ENCODE measurements at regions of chr4 and their contacts with region 1.

Region 1: DNA sequence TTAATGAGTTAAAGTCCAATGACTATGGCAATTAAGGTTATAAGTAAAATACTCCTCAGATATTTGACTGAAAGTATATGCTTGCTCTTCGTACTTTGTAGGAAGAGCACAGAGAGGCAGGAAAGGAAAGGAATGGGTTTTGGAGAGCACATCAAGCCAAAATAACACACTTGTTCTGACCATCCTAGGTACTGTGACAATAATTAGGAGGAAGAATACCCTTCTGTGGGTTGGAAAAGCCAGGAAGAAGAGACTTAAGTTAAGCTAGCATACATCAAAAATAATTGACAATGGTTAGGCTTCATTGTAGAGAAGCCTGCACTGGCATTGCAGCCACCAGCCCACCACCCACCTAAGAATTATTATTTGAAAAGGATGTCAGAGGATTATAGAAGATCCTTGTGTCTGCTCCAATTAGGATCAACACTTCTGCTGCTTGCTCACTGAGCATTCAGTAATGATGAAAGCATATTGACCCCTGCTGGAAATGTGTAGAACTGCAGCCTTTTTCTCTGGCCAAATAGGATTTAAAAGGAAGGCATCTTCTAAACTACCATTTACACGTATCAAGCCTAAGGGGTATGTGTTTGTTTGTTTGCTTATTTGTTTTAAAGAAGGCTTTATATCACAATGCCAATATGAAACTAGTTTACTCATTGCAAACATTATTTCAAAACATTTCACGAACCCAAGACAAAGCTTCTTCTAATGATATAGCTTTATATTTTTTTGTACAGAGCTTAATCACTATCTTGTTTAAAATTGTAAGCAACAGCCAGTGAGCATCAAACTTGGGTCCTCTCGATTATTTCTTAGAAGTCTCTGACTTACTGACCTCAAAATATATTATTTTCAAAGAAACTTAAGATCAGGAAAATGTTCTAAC is 286.2 kb upstream of the TET2 start:
- DNase-seq: no peak
- ATAC-seq: peak; percentile 88
- H3K4me3 ChIP-seq: no peak overlapping the region
- H3K27ac ChIP-seq: no peak overlapping the region
- H3K4me1 ChIP-seq: no peaks in the 10 kb centered on the region
- H3K27me3 ChIP-seq: no peaks in the 10 kb centered on the region

Region 2: DNA sequence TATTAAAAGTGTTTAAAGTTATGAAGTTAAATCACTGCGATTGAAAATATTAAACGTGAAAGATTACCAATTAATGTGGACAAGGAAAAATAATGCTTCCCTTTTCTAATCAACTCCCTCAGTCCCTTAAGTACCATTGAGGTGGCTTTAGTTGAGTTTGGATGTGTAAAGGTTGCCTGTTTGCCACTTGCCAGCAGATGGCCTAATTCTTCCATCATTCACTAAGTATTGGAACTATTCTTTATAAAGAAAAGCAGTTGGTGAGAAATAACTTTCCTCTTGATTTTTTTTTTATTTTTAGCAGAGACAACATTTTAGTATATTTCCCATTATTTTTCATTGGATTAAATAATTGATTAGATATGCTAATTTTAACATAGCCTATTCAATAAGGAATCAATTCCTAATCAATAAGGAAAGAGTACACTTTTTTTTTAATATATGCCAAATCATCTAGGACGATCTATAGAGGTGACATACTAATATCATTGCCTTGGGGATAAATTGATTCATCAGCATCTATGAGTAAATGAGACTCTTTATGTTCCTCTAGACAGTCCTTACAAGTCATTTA is 844.7 kb before region 1 on chr4:
- intact Hi-C with region 1: loop called in 1 of 2 experiments (anchors 10 kb)
- DNase-seq: no peak
- ATAC-seq: no peak
- H3K4me3 ChIP-seq: no peak overlapping the region
- H3K27ac ChIP-seq: no peak overlapping the region
- H3K4me1 ChIP-seq: no peaks in the 10 kb centered on the region
- H3K27me3 ChIP-seq: no peaks in the 10 kb centered on the region

Region 3: DNA sequence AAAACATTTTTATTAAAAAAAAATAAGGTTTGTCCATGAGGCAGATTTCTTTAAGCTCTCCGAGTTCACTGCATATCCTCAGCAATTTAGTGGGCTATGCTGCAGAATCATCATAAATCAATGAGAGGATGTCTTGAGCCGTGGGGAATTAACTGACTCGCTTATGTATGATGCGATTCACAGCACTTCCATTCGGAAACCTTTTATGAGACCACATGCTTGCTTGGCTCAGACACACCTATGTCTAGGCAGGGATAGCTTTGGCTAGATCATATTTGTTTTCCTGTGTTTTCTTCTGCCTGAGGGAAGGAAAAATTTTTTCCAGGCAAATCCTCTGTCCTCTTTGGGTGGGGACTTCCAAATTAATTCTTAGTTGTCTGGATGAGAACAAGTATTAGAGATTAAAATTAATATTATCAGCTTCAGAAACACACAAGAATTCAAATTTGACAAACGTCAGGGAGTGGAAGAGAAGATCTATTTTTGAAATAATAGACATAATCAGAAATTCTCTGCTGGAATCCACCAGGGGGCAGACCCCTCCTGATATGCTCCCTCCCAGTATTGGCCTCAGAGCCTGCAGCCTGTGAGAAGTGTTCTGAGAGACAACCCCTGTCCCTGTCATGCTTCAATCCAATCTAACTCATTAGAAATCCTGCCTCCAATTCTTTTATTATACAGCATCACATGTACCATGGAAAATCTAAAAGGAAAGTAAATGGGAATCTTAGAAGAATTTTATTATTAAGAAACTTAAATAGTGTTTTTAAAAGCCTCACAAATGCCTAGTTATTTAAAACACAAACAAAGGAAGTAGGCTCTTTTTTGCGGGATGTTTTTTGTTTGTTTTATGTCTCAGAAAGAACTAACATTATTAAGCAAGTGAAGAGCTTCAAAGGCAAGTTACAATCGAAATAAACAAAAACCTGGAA is 795.6 kb before region 1 on chr4:
- intact Hi-C with region 1: loop called (anchors 5 kb)
- DNase-seq: peak in 1 of 2 donors; percentile 32
- ATAC-seq: no peak
- H3K4me3 ChIP-seq: no peak overlapping the region
- H3K27ac ChIP-seq: no peak overlapping the region
- H3K4me1 ChIP-seq: no peaks in the 10 kb centered on the region
- H3K27me3 ChIP-seq: no peaks in the 10 kb centered on the region

Region 4: DNA sequence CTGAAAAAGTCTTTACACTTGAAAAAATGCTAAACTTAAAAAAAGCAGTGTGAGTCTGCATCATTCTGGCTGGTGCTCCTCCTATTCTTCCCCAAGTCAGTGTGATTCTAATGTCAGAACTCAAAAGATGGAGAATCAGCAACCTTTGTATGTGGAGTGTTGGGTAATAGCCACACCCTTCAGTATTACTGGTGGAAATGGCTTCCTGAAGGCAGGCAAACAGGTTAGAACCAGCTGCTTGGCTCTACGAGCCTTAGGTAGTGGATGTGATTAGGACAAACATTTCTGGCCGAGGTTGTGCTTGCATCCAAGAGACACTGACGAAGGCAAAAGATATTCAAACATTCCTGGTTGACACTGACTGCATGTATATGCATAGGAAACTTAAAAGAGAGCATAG is 787.2 kb before region 1 on chr4:
- intact Hi-C with region 1: loop called (anchors 5 kb)
- DNase-seq: no peak
- ATAC-seq: no peak
- H3K4me3 ChIP-seq: no peak overlapping the region
- H3K27ac ChIP-seq: no peak overlapping the region
- H3K4me1 ChIP-seq: no peaks in the 10 kb centered on the region
- H3K27me3 ChIP-seq: no peaks in the 10 kb centered on the region

Region 5: DNA sequence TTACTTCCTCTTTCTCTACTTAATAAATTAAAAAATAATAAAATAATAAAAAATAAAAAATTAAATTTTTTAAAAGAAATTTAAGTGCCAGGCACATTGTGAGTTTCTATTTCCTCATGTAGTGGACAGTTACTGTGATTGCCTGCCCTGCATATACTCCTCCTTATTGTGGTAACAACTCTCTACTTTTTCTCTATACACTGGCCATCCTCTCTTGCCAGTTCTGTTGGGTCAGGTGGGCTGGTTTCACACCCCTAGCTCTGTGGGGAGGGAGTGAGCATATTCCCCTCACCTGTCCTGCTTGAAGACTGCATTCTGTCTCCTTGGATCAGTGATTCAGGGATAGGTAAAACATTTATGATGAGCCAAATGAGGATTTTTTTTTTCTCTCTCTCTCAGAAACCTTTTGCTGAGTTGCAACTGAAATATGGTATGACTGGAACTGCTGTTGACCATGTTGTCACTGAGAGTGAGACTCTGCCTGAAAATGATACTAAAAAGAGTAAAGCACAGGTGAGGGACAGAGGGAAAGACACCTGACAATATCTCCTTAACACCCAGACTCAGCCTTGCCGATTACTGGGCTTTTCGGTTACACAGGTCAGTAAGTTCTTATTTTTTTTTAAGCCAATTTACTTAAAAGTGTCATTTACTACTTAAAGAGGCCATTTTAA is 403.0 kb before region 1 on chr4:
- intact Hi-C with region 1: no loop called
- DNase-seq: no peak
- ATAC-seq: no peak
- H3K4me3 ChIP-seq: no peak overlapping the region
- H3K27ac ChIP-seq: no peak overlapping the region
- H3K4me1 ChIP-seq: no peaks in the 10 kb centered on the region
- H3K27me3 ChIP-seq: no peaks in the 10 kb centered on the region

Region 6: GRCh38 chr4:104693599-104694201 is 166.8 kb before region 1 on chr4:
- intact Hi-C with region 1: loop called in 1 of 2 experiments (anchors 10 kb)
- DNase-seq: no peak
- ATAC-seq: no peak
- H3K4me3 ChIP-seq: no peak overlapping the region
- H3K27ac ChIP-seq: no peak overlapping the region
- H3K4me1 ChIP-seq: no peaks in the 10 kb centered on the region
- H3K27me3 ChIP-seq: no peaks in the 10 kb centered on the region

Region 7: GRCh38 chr4:104879367-104879766 is 18.9 kb after region 1 on chr4:
- intact Hi-C with region 1: no loop called
- DNase-seq: no peak
- ATAC-seq: no peak
- H3K4me3 ChIP-seq: no peak overlapping the region
- H3K27ac ChIP-seq: no peak overlapping the region
- H3K4me1 ChIP-seq: no peaks in the 10 kb centered on the region
- H3K27me3 ChIP-seq: no peaks in the 10 kb centered on the region

Region 8: DNA sequence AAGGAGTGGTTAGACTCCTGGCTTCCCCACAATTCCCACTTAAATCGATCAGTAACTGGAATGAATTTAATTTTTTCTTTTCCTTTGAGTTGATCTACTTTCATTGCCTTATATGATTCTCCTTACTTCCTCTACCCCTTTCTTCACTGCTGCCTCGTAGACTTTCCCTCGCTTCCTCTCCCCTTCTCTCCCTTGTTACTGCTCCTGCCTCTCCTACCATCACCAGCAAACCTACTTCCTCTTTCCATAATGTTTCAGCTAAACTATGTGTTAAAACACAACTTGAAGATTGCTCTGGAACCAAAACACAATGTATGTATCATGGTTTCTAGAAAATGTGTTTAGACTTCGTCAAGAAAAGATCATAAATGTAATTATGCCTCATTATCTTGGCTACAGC is 154.2 kb after region 1 on chr4:
- intact Hi-C with region 1: no loop called
- DNase-seq: no peak
- ATAC-seq: no peak
- H3K4me3 ChIP-seq: no peak overlapping the region
- H3K27ac ChIP-seq: no peak overlapping the region
- H3K4me1 ChIP-seq: no peaks in the 10 kb centered on the region
- H3K27me3 ChIP-seq: no peaks in the 10 kb centered on the region

Measured in aorta (tissue), 5 donors.